Naive thymus-derived CD4-positive, alpha-beta T cell (primary cell): ENCODE measurements at regions of chr4 and their contacts with region 1.

Region 1: GRCh38 chr4:32025851-32026459 is 1305.8 kb downstream of the PCDH7 start:
- DNase-seq: no peak
- ATAC-seq: no peak
- H3K4me3 ChIP-seq: no peak overlapping the region
- H3K4me3 Mint-ChIP-seq: no peak overlapping the region
- H3K27ac ChIP-seq: no peak overlapping the region
- H3K27ac Mint-ChIP-seq: no peak overlapping the region
- H3K4me1 ChIP-seq: no peaks in the 10 kb centered on the region
- H3K4me1 Mint-ChIP-seq: no peaks in the 10 kb centered on the region
- H3K27me3 ChIP-seq: no peaks in the 10 kb centered on the region
- H3K27me3 Mint-ChIP-seq: no peaks in the 10 kb centered on the region

Region 2: DNA sequence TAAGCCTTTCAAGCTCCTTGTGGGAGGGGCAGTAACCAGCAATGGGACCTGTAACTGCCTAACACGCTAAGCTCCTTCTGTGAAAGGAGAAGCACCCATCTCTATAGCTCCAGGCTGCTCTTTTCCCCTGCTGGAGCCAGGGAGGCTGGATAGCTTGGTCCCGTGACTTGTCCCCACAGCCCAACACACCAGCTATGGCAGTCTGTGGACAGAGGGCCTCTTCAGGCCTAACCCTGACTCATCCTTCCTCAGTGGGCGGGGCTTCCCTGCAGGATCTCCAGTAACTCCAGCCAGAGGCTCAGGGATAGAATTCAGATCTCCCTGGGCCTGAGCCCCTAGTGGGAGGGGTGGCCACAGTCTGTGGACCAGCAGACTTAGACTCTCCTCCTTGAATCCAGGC is 15.7 kb before region 1 on chr4:
- CTCF ChIA-PET with region 1: no interaction called
- POLR2A ChIA-PET with region 1: no interaction called
- intact Hi-C with region 1: no loop called
- DNase-seq: no peak
- ATAC-seq: no peak
- H3K4me3 ChIP-seq: no peak overlapping the region
- H3K4me3 Mint-ChIP-seq: no peak overlapping the region
- H3K27ac ChIP-seq: no peak overlapping the region
- H3K27ac Mint-ChIP-seq: no peak overlapping the region
- H3K4me1 ChIP-seq: no peaks in the 10 kb centered on the region
- H3K4me1 Mint-ChIP-seq: peaks cover 0 to 1% (median 0%) of the 10 kb centered on the region in 7 donors
- H3K27me3 ChIP-seq: no peaks in the 10 kb centered on the region
- H3K27me3 Mint-ChIP-seq: no peaks in the 10 kb centered on the region

Region 3: DNA sequence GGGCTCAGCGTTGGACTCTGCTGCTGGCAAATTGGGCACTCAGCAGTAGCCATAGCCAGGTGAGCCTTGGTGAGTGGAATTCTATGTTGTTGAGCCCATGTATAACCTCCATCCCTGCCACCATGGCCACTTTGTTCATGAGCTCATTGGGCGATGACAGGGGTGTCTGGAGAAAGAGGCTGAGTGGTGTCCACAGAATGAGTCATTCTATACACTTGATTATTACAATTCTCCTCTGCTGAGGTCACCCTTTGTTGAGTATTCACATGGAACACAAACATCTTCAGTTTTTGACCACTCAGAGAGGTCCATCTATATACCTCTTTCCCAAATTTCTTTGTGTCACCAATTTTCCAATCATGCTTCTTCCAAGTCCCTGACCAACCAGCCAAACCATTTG is 36.0 kb after region 1 on chr4:
- CTCF ChIA-PET with region 1: no interaction called
- POLR2A ChIA-PET with region 1: no interaction called
- intact Hi-C with region 1: loop called in 1 of 2 experiments (anchors 1 kb)
- DNase-seq: no peak
- ATAC-seq: no peak
- H3K4me3 ChIP-seq: no peak overlapping the region
- H3K4me3 Mint-ChIP-seq: no peak overlapping the region
- H3K27ac ChIP-seq: no peak overlapping the region
- H3K27ac Mint-ChIP-seq: no peak overlapping the region
- H3K4me1 ChIP-seq: no peaks in the 10 kb centered on the region
- H3K4me1 Mint-ChIP-seq: no peaks in the 10 kb centered on the region
- H3K27me3 ChIP-seq: no peaks in the 10 kb centered on the region
- H3K27me3 Mint-ChIP-seq: no peaks in the 10 kb centered on the region